Dendritic cell treated with granulocyte-macrophage colony-stimulating factor and Interleukin-4, amounts not matched to agents 40 ng/mL and 50 ng/mL, for 4 days (primary cell): ENCODE measurements at regions of chr15 and their contacts with region 1.

Region 1: GRCh38 chr15:25372298-25372697 is 66.5 kb downstream of the UBE3A start:
- H3K4me3 Mint-ChIP-seq: no peak overlapping the region
- H3K27ac Mint-ChIP-seq: peak overlapping the region; percentile 74
- H3K4me1 Mint-ChIP-seq: peaks cover 19% of the 10 kb centered on the region
- H3K27me3 Mint-ChIP-seq: no peaks in the 10 kb centered on the region

Region 2: GRCh38 chr15:24718289-24719082 is 653.8 kb before region 1 on chr15:
- intact Hi-C with region 1: no loop called
- H3K4me3 Mint-ChIP-seq: no peak overlapping the region
- H3K27ac Mint-ChIP-seq: no peak overlapping the region
- H3K4me1 Mint-ChIP-seq: no peaks in the 10 kb centered on the region
- H3K27me3 Mint-ChIP-seq: no peaks in the 10 kb centered on the region

Region 3: DNA sequence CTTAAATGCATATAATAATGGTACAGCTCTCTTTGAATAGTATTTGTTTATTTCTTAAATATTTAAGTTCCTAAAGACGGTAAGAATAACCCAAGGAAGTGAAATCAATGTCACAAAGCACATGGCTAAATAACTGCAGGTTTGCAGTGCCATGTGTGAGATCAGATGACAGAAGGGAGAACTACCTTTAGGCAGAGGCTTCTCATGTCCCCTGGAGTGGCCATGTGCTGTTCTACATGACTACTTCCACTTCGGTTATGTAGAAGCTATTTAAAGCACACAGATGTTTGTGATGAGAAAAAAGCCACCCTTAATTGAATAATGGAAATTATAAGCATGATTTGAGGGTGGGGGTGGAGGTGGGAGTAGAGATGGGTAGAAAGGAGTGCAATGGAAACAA is 42.6 kb before region 1 on chr15:
- intact Hi-C with region 1: loop called (anchors 10 kb)
- H3K4me3 Mint-ChIP-seq: no peak overlapping the region
- H3K27ac Mint-ChIP-seq: no peak overlapping the region
- H3K4me1 Mint-ChIP-seq: no peaks in the 10 kb centered on the region
- H3K27me3 Mint-ChIP-seq: no peaks in the 10 kb centered on the region

Region 4: DNA sequence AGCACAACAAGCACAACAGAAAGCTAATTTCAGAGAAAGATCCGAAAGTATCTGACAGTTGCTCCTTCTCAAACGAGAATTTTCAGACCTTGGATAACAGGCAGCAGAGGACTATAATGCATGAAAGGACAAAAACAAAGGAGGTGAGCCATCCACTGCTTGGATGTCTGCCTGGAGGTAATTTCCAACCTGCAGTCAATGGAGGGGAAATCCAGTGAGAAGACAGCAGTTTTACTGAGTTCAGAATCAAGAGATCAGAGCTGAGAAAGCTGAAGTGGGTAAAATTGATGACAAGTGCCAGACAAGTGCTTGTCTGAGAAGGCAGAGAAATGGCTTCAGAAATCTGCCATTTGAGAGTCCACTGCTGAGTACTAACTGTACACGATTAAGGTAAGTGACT is 44.4 kb after region 1 on chr15:
- intact Hi-C with region 1: no loop called
- H3K4me3 Mint-ChIP-seq: no peak overlapping the region
- H3K27ac Mint-ChIP-seq: no peak overlapping the region
- H3K4me1 Mint-ChIP-seq: peaks cover 44% of the 10 kb centered on the region
- H3K27me3 Mint-ChIP-seq: no peaks in the 10 kb centered on the region